Activated B cell treated with CpG ODN at 0.5 μM for 24 hours (primary cell): ENCODE measurements at regions of chr12 and their contacts with region 1.

Region 1: GRCh38 chr12:85549640-85550039 is 269.6 kb downstream of the ALX1 start:
- DNase-seq: no peak
- ATAC-seq: no peak
- H3K4me3 Mint-ChIP-seq: no peak overlapping the region
- H3K27ac Mint-ChIP-seq: no peak overlapping the region
- H3K4me1 Mint-ChIP-seq: no peaks in the 10 kb centered on the region
- H3K27me3 Mint-ChIP-seq: no peaks in the 10 kb centered on the region
- CTCF ChIP-seq: no peak

Region 2: DNA sequence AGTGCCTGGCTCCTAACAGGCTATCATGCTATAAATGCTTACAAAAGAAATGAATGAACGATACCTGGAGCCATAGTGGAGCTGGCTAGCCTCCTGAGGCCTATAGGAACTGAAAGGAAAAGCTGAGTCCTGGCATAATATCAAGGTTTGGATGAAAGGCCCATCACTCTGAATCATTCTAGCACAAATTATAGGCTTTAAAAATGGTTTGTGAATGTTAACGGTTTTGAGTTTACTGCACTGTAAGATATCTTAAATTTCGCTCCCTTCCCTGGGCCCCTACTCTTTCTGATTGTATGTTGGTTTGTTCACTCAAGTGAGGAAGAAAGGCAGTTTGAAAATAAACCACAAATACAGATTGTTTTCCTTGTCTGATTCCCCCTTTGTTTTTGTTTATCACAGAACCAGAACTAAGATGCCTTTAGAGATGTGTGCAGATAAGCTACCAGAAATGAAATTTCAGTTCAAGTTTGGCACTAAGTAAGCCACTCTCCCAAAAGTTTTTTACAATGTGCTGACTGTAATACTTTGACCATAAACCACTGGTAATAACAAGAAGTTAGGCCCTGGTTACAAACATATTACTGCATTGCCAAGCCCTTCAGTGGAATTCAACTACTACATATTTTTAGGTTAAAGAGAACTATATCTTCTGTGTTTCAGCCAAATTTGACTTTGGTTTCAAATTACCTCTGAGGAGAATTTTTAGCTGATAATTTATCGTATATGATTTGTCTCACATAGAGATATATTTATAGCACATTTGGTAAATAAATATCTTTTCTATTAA is 180.1 kb before region 1 on chr12:
- CTCF ChIA-PET with region 1: no interaction called
- POLR2A ChIA-PET with region 1: no interaction called
- intact Hi-C with region 1: no loop called
- DNase-seq: no peak
- ATAC-seq: no peak
- H3K4me3 Mint-ChIP-seq: no peak overlapping the region
- H3K27ac Mint-ChIP-seq: no peak overlapping the region
- H3K4me1 Mint-ChIP-seq: no peaks in the 10 kb centered on the region
- H3K27me3 Mint-ChIP-seq: no peaks in the 10 kb centered on the region
- CTCF ChIP-seq: no peak

Region 3: GRCh38 chr12:85476756-85477155 is 72.9 kb before region 1 on chr12:
- CTCF ChIA-PET with region 1: no interaction called
- POLR2A ChIA-PET with region 1: no interaction called
- intact Hi-C with region 1: no loop called
- DNase-seq: no peak
- ATAC-seq: no peak
- H3K4me3 Mint-ChIP-seq: no peak overlapping the region
- H3K27ac Mint-ChIP-seq: no peak overlapping the region
- H3K4me1 Mint-ChIP-seq: no peaks in the 10 kb centered on the region
- H3K27me3 Mint-ChIP-seq: no peaks in the 10 kb centered on the region
- CTCF ChIP-seq: no peak

Region 4: DNA sequence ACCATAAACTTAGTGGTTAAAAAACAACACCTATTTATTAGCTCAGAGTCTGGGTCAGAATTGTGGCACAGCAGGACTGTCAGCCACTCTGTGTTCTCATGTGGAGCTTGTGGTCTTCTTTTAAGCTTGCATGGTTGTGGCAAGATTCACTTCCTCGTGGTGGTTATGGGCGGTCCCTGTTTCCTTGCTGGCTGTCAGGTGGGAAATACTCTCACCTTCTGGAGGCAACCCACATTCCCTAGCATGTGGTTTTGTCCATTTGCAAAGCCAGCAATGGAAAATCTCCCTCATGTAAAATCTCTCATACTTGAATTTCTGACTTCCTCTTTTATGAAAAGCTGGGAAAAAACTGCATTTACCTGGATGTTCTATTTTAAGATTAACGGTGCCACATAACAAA is 39.8 kb before region 1 on chr12:
- CTCF ChIA-PET with region 1: no interaction called
- POLR2A ChIA-PET with region 1: no interaction called
- intact Hi-C with region 1: loop called (anchors 1 kb)
- DNase-seq: no peak
- ATAC-seq: no peak
- H3K4me3 Mint-ChIP-seq: no peak overlapping the region
- H3K27ac Mint-ChIP-seq: no peak overlapping the region
- H3K4me1 Mint-ChIP-seq: peaks cover 12% of the 10 kb centered on the region
- H3K27me3 Mint-ChIP-seq: no peaks in the 10 kb centered on the region
- CTCF ChIP-seq: no peak

Region 5: GRCh38 chr12:85568395-85569103 is 18.9 kb after region 1 on chr12:
- CTCF ChIA-PET with region 1: no interaction called
- POLR2A ChIA-PET with region 1: no interaction called
- intact Hi-C with region 1: no loop called
- DNase-seq: no peak
- ATAC-seq: no peak
- H3K4me3 Mint-ChIP-seq: no peak overlapping the region
- H3K27ac Mint-ChIP-seq: no peak overlapping the region
- H3K4me1 Mint-ChIP-seq: no peaks in the 10 kb centered on the region
- H3K27me3 Mint-ChIP-seq: no peaks in the 10 kb centered on the region
- CTCF ChIP-seq: no peak